ENCODE measurements at regions of chrX and their contacts with region 1.

Region 1: GRCh38 chrX:110418316-110419235 is 59.9 kb downstream of the RTL9 start:
- DNase-seq: no peak
- ATAC-seq: no peak
- H3K4me3 Mint-ChIP-seq: no peak overlapping the region
- H3K27ac Mint-ChIP-seq: no peak overlapping the region
- H3K4me1 Mint-ChIP-seq: no peaks in the 10 kb centered on the region
- H3K27me3 Mint-ChIP-seq: no peaks in the 10 kb centered on the region

Region 2: GRCh38 chrX:110383414-110383813 is 35.2 kb before region 1 on chrX:
- CTCF ChIA-PET with region 1: no interaction called
- POLR2A ChIA-PET with region 1: no interaction called
- DNase-seq: no peak
- ATAC-seq: no peak
- H3K4me3 Mint-ChIP-seq: no peak overlapping the region
- H3K27ac Mint-ChIP-seq: no peak overlapping the region
- H3K4me1 Mint-ChIP-seq: no peaks in the 10 kb centered on the region
- H3K27me3 Mint-ChIP-seq: peaks cover 9% of the 10 kb centered on the region

Region 3: DNA sequence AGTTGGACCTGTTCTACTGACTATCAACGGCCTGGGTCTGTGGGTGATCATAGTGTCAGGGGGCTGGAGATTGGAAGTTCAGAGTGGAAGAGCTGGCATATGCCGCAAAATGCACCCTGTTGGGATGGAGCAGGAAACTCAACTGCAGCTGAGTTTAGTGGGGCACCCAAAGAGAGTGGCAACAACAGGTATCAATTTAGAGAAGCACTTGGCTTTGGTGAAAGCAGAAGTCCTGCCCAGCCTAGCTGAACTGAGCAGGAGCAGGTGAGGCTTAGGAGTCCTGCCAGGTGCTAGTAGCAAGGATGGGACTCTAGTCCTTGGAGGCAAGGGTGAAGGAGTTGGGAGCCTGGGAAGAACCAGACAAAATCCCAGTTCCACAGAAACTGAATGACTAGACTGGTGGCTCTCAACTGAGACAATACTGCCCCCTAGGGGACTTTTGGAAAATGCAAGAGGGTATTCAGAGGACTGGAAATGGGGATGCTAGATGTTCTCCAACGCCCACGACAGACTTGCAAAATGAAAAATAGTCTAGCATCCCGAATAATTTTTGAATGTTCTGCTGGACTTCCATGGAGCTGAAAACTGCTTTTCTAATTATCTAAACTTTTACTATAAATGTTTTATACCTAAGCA is 10.5 kb before region 1 on chrX:
- CTCF ChIA-PET with region 1: interaction called, 13 read pairs
- POLR2A ChIA-PET with region 1: no interaction called
- DNase-seq: peak; percentile 48
- ATAC-seq: no peak
- H3K4me3 Mint-ChIP-seq: no peak overlapping the region
- H3K27ac Mint-ChIP-seq: no peak overlapping the region
- H3K4me1 Mint-ChIP-seq: no peaks in the 10 kb centered on the region
- H3K27me3 Mint-ChIP-seq: peaks cover 5% of the 10 kb centered on the region

Measured in activated CD8-positive, alpha-beta T cell treated with anti-CD3 and anti-CD28 coated beads, Interleukin-2, amount 10 ng/mL, durations not matched to agents 7 days and 5 days (primary cell).